ENCODE measurements at regions of chr7 and their contacts with region 1.

Region 1: GRCh38 chr7:142711746-142712619 is 37.3 kb upstream of the PRSS1 start:
- DNase-seq: peak; percentile 40
- H3K4me3 Mint-ChIP-seq: no peak overlapping the region
- H3K27ac Mint-ChIP-seq: no peak overlapping the region
- H3K4me1 Mint-ChIP-seq: no peaks in the 10 kb centered on the region
- H3K27me3 Mint-ChIP-seq: peaks cover 76% of the 10 kb centered on the region
- CTCF ChIP-seq: peak; percentile 47

Region 2: GRCh38 chr7:142632291-142633134 is 79.5 kb before region 1 on chr7:
- CTCF ChIA-PET with region 1: interaction called, 25 read pairs
- POLR2A ChIA-PET with region 1: interaction called, 3 read pairs
- intact Hi-C with region 1: loop called (anchors 10 kb)
- DNase-seq: peak; percentile 75
- H3K4me3 Mint-ChIP-seq: no peak overlapping the region
- H3K27ac Mint-ChIP-seq: no peak overlapping the region
- H3K4me1 Mint-ChIP-seq: peaks cover 11% of the 10 kb centered on the region
- H3K27me3 Mint-ChIP-seq: peaks cover 14% of the 10 kb centered on the region
- CTCF ChIP-seq: peak; percentile 61

Region 3: GRCh38 chr7:142669074-142669654 is 42.8 kb before region 1 on chr7:
- CTCF ChIA-PET with region 1: no interaction called
- POLR2A ChIA-PET with region 1: no interaction called
- intact Hi-C with region 1: loop called (anchors 1 kb)
- DNase-seq: peak; percentile 22
- H3K4me3 Mint-ChIP-seq: no peak overlapping the region
- H3K27ac Mint-ChIP-seq: no peak overlapping the region
- H3K4me1 Mint-ChIP-seq: no peaks in the 10 kb centered on the region
- H3K27me3 Mint-ChIP-seq: peaks cover 50% of the 10 kb centered on the region
- CTCF ChIP-seq: peak; percentile 32

Region 4: DNA sequence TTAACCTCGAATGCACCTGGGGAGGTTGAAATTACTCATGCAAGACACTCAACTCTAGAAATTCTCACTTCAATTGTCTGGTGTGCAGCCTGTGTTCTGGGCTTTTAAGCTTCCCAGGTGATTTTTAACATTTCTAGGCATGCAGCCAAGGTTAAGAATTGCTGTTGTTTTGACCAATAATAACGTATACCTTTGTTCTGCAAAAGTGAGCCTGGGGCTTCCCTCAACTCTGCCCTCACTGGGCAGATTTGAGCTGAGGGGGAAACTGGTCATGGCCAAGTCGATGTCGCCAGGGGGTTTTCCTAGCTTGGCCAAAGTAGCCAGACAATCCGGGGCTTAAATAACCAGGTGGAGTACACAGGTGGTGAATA is 59.4 kb after region 1 on chr7:
- CTCF ChIA-PET with region 1: interaction called, 17 read pairs
- POLR2A ChIA-PET with region 1: no interaction called
- intact Hi-C with region 1: no loop called
- DNase-seq: peak; percentile 30
- H3K4me3 Mint-ChIP-seq: no peak overlapping the region
- H3K27ac Mint-ChIP-seq: no peak overlapping the region
- H3K4me1 Mint-ChIP-seq: peaks cover 13% of the 10 kb centered on the region
- H3K27me3 Mint-ChIP-seq: peaks cover 63% of the 10 kb centered on the region
- CTCF ChIP-seq: no peak

Region 5: GRCh38 chr7:142788303-142789289 is 76.6 kb after region 1 on chr7:
- CTCF ChIA-PET with region 1: interaction called, 110 read pairs
- POLR2A ChIA-PET with region 1: interaction called, 5 read pairs
- intact Hi-C with region 1: loop called (anchors 1 kb)
- DNase-seq: no peak
- H3K4me3 Mint-ChIP-seq: no peak overlapping the region
- H3K27ac Mint-ChIP-seq: no peak overlapping the region
- H3K4me1 Mint-ChIP-seq: peaks cover 5% of the 10 kb centered on the region
- H3K27me3 Mint-ChIP-seq: peaks cover 31% of the 10 kb centered on the region
- CTCF ChIP-seq: no peak